MCF 10A (cell line): ENCODE measurements at regions of chr12 and their contacts with region 1.

Region 1: GRCh38 chr12:98373025-98373554 is 142.3 kb upstream of the TMPO start:
- DNase-seq: peak; percentile 75
- H3K4me3 Mint-ChIP-seq: no peak overlapping the region
- H3K27ac Mint-ChIP-seq: no peak overlapping the region
- H3K4me1 Mint-ChIP-seq: peaks cover 10% of the 10 kb centered on the region
- H3K27me3 Mint-ChIP-seq: peaks cover 38% of the 10 kb centered on the region
- CTCF ChIP-seq: peak; percentile 66

Region 2: GRCh38 chr12:96985480-96986362 is 1387.4 kb before region 1 on chr12:
- CTCF ChIA-PET with region 1: interaction called, 7 read pairs
- POLR2A ChIA-PET with region 1: interaction called, 3 read pairs
- intact Hi-C with region 1: loop called (anchors 5 kb)
- DNase-seq: peak; percentile 21
- H3K4me3 Mint-ChIP-seq: no peak overlapping the region
- H3K27ac Mint-ChIP-seq: no peak overlapping the region
- H3K4me1 Mint-ChIP-seq: peaks cover 5% of the 10 kb centered on the region
- H3K27me3 Mint-ChIP-seq: peaks cover 22% of the 10 kb centered on the region
- CTCF ChIP-seq: peak; percentile 88

Region 3: GRCh38 chr12:97716356-97716755 is 656.7 kb before region 1 on chr12:
- CTCF ChIA-PET with region 1: no interaction called
- POLR2A ChIA-PET with region 1: no interaction called
- intact Hi-C with region 1: loop called (anchors 5 kb)
- DNase-seq: peak; percentile 27
- H3K4me3 Mint-ChIP-seq: no peak overlapping the region
- H3K27ac Mint-ChIP-seq: no peak overlapping the region
- H3K4me1 Mint-ChIP-seq: no peaks in the 10 kb centered on the region
- H3K27me3 Mint-ChIP-seq: no peaks in the 10 kb centered on the region
- CTCF ChIP-seq: peak; percentile 42

Region 4: DNA sequence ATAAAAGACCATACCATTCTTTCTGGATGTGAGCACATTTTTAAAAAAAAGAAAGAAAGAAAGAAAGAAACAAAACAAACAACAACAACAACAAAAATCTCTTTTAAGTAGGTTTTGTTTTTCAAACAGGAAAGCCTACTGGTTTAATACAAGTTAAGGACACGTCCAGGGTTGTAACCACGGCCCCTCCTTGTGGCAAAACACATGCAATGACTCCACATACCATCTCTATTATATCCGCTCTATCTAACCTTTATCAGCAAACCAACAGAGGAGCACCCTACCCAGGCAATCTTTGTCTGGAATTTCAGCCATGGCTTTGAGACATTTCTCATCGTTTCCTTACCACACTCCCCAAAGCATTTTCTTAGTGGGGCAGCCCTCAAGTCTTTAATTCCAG is 218.2 kb before region 1 on chr12:
- CTCF ChIA-PET with region 1: no interaction called
- POLR2A ChIA-PET with region 1: no interaction called
- intact Hi-C with region 1: loop called (anchors 2 kb)
- DNase-seq: peak; percentile 54
- H3K4me3 Mint-ChIP-seq: no peak overlapping the region
- H3K27ac Mint-ChIP-seq: no peak overlapping the region
- H3K4me1 Mint-ChIP-seq: no peaks in the 10 kb centered on the region
- H3K27me3 Mint-ChIP-seq: peaks cover 48% of the 10 kb centered on the region
- CTCF ChIP-seq: peak; percentile 18

Region 5: DNA sequence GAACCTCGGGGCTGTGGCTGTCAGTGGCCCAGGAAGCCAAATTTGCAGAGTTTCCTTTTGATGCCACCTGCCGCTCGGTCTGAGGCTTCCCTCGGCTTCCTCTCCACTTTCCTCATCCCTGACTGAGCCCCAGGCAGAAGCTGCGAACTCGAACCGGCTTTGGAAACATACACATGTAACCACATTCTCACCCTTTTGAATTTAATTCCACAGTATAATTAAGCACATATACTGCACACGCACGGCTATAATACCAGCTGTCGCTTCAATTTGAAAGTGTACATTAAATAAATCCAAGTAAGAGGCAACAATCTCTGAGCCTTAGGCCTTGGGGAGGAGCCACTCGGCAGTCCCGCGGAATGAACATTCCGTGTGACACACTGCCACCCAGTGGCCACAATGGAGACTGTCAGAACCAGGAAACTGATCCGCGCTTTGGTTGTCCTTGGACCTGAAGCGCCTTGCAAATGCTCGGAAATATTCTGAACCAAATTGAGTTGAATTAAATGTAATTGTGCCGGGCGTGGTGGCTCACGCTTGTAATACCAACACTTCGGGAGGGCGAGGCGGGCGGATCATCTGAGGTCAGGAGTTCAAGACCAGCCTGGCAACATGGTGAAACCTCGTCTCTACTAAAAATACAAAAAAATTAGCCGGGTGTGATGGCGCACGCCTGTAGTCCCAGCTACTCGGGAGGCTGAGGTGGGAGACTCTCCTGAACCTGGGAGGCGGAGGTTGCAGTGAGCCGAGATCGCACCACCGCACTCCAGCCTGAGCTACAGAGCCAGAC is 24.4 kb after region 1 on chr12:
- CTCF ChIA-PET with region 1: interaction called, 21 read pairs
- POLR2A ChIA-PET with region 1: no interaction called
- intact Hi-C with region 1: no loop called
- DNase-seq: peak; percentile 82
- H3K4me3 Mint-ChIP-seq: peak overlapping the region; percentile 74
- H3K27ac Mint-ChIP-seq: peak overlapping the region; percentile 29
- H3K4me1 Mint-ChIP-seq: peaks cover 19% of the 10 kb centered on the region
- H3K27me3 Mint-ChIP-seq: peaks cover 6% of the 10 kb centered on the region
- CTCF ChIP-seq: peak; percentile 85

Region 6: GRCh38 chr12:98449584-98449983 is 76.5 kb after region 1 on chr12:
- CTCF ChIA-PET with region 1: no interaction called
- POLR2A ChIA-PET with region 1: no interaction called
- intact Hi-C with region 1: no loop called
- DNase-seq: no peak
- H3K4me3 Mint-ChIP-seq: no peak overlapping the region
- H3K27ac Mint-ChIP-seq: no peak overlapping the region
- H3K4me1 Mint-ChIP-seq: peaks cover 17% of the 10 kb centered on the region
- H3K27me3 Mint-ChIP-seq: no peaks in the 10 kb centered on the region
- CTCF ChIP-seq: no peak

Region 7: GRCh38 chr12:98644711-98645402 is 271.8 kb after region 1 on chr12 and contains the starts of genes APAF1 and IKBIP:
- CTCF ChIA-PET with region 1: no interaction called
- POLR2A ChIA-PET with region 1: no interaction called
- intact Hi-C with region 1: no loop called
- DNase-seq: peak; percentile 97
- H3K4me3 Mint-ChIP-seq: peak within 1 kb of the TSS; percentile 93
- H3K27ac Mint-ChIP-seq: peak within 1 kb of the TSS; percentile 93
- H3K4me1 Mint-ChIP-seq: peaks cover 7% of the 10 kb centered on the region
- H3K27me3 Mint-ChIP-seq: no peaks in the 10 kb centered on the region
- CTCF ChIP-seq: no peak
- total RNA-seq, gene APAF1: 5.9 and 9.1 TPM in 2 replicates
- total RNA-seq, gene IKBIP: 29.2 and 43.0 TPM in 2 replicates